Cardiac septum (tissue), 1 donor: ENCODE measurements at regions of chr13 and their contacts with region 1.

Region 1: GRCh38 chr13:48580185-48580803 is 47.4 kb upstream of the RCBTB2 start:
- DNase-seq: no peak

Region 2: DNA sequence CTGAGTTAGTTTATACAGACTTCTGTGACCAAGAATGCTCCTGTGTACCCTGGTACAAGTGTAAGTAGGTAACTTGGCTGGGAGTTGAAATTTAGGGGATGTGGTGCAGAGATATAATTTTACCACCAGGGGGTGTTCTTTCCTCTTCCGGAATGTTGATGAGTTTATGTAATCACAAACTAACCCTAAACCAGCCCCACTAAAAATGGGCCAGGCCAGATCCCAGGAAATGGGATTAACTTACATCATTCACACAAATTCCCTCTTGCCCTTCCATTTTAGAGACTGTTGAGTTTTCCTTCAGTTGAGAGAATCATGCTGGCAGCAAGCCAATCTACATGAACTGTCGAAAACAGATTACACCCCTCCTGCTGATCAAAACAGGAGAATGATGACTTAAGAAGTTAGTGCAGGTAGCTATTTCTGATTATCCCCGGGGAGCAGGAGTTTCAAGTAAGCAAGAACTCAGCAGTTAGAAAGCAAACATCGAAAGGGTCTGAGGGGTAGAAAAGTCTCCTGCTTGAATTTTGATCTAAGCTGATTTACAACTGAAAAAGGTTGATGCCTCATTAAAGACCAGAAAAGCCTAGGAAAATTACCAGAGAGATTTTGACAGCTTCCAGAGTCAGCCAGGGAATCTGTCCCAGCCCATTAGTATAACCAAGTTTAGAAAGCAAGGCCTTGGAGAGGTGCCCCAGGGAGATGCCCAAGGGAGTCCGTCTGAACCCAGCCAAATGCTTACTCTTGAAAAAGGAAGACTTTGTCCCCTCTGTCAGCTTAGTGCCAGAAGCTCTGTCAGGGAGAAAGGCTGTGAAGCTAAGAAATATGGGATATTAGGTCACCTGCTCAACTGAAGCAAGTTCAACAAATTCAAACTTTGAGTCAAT is 453.1 kb before region 1 on chr13:
- intact Hi-C with region 1: loop called (anchors 5 kb)
- DNase-seq: no peak

Region 3: GRCh38 chr13:48334534-48335127 is 245.7 kb before region 1 on chr13:
- intact Hi-C with region 1: loop called (anchors 2 kb)
- DNase-seq: no peak

Region 4: DNA sequence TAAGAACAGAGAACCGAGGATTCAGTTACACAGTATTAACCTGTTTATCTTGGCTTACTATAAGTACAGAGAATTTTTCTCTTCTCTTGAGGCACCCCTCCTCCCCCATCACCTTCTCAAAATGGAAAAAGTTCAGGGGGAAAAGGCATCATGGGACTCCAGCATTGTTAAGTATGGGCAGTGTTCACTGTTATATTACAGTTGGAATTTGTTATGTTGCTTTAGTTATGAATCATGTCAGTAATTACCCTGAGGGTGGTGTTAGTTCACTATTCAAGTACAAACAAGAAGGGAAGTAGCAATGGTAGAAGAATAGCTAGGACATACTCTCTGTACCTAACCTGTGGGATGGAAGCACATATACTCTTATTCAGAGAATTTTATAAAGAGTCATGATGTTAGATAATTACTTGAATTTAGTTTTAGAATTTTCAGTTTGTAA is 179.4 kb before region 1 on chr13:
- intact Hi-C with region 1: loop called (anchors 5 kb)
- DNase-seq: no peak

Region 5: DNA sequence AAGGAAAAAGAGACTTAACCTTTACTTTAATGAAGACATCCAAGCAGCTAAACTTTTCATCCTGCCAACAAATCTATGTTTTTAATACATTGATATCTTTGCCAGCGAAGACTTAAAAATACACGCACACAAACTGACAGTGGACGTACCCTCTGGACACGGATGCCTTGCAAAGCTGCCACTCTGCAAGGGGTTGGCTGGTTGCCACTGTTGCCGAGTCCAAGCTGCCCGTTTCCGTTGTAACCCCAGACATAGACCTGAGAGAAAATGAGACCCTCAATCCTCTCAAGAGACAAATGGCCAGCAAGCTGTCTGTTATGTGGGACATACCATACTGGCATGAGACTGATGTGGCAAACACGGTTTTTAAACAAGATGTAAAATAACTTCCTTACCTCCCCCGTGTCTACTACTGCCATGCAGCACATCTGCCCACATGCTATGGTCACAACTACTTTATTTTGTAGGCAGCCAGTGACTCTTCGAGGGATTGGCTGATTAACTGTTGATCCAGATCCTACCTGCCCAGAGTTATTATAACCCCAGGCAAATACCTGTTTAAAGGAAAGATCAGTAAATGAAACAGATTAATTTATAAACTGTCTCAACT is 68.6 kb before region 1 on chr13:
- intact Hi-C with region 1: no loop called
- DNase-seq: no peak

Region 6: DNA sequence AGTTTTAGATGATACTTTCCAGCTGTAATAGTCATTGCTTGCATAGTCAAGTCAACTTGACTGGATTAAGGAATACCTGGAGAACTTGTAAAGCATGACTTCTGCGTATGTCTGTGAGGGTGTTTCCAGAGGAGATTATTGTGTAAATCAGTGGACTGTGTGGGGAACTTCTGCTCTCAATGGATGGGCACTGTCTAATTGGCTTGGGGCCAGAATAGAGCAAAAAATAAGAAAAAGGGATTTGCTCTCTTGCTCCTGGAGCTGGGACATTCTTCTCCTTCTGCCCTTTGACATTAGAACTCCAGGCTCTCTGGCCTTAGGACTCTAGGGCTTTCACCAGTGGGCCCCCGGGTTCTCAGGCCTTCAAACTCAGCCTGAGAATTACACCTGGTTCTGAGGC is 106.5 kb after region 1 on chr13:
- intact Hi-C with region 1: no loop called
- DNase-seq: no peak